Naive thymus-derived CD4-positive, alpha-beta T cell (primary cell): ENCODE measurements at regions of chr2 and their contacts with region 1.

Region 1: GRCh38 chr2:105843476-105844374 is 99.0 kb downstream of the NCK2 start:
- DNase-seq: no peak
- ATAC-seq: no peak
- H3K4me3 ChIP-seq: no peak overlapping the region
- H3K4me3 Mint-ChIP-seq: peak overlapping the region in 7 of 10 donors; percentile 8 to 52 (median 44)
- H3K27ac ChIP-seq: no peak overlapping the region
- H3K27ac Mint-ChIP-seq: peak overlapping the region; percentile 26 to 83 (median 72)
- H3K4me1 ChIP-seq: peaks cover 47 to 55% of the 10 kb centered on the region in 2 donors
- H3K4me1 Mint-ChIP-seq: peaks cover 62 to 98% (median 90%) of the 10 kb centered on the region in 7 donors
- H3K27me3 ChIP-seq: no peaks in the 10 kb centered on the region
- H3K27me3 Mint-ChIP-seq: no peaks in the 10 kb centered on the region

Region 2: DNA sequence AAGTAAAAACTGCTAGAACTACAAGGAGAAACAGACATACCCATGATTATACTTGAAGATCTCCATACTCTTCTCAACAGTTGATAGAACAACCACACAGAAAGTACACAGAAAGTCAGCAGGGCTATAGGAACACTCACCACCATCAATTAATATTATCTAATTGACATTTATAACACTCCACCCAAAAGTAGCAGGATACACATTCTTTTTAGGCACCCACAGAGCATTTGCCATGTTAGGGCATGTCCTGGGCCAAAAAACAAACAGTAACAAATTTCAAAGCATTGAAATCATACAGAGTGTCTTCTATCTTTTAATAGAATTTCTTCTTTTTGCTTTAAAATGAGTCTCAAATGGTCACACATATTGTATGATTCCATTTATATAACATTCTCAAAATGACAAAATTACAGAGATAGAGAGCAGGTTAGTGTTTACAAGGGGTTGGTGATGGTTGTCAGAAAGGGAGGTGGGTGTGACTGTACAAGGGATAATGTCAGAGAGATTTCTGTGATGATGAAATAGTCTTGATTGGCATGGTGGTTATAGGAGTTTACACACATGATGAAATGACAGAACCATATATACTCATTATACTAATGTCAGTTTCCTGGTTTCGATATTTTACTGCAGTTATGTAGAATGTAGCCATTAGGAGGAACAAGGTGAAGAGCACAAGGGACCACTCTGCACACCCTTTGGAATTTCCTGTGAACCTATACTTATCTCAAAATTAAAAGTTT is 16.2 kb before region 1 on chr2:
- CTCF ChIA-PET with region 1: interaction called, 3 read pairs
- POLR2A ChIA-PET with region 1: no interaction called
- intact Hi-C with region 1: loop called in 1 of 2 experiments (anchors 2 kb)
- DNase-seq: no peak
- ATAC-seq: peak; percentile 62
- H3K4me3 ChIP-seq: no peak overlapping the region
- H3K4me3 Mint-ChIP-seq: peak overlapping the region in 2 of 10 donors; percentile 12 to 45
- H3K27ac ChIP-seq: no peak overlapping the region
- H3K27ac Mint-ChIP-seq: peak overlapping the region in 8 of 9 donors; percentile 28 to 83 (median 76)
- H3K4me1 ChIP-seq: peaks cover 23 to 38% of the 10 kb centered on the region in 2 donors
- H3K4me1 Mint-ChIP-seq: peaks cover 52 to 95% (median 88%) of the 10 kb centered on the region in 7 donors
- H3K27me3 ChIP-seq: no peaks in the 10 kb centered on the region
- H3K27me3 Mint-ChIP-seq: no peaks in the 10 kb centered on the region